ENCODE measurements at regions of chr5 and their contacts with region 1.

Region 1: DNA sequence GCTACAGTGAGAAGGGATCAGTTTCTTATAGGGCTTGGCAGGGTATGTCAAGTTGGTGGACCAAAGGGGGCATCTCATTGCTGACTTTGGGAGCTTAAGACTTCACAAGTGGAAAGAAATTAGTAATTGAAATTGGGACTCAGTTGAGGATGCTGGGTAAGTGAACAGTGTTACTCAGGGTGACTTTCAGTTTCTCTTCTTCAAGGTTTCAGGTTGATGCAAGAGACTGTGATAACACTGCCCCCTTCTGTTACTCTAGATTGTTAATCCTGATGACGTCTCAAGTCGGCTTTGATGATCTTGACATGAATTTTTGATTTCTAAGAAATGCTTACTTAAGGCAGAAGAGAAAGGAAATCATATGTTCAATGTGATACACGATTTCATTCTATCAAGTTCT is 21.3 kb downstream of the KCTD16 start:
- DNase-seq: peak; percentile 88
- H3K4me3 ChIP-seq: no peak overlapping the region
- H3K27ac ChIP-seq: peak overlapping the region; percentile 88
- H3K4me1 ChIP-seq: peaks cover 44% of the 10 kb centered on the region
- H3K27me3 ChIP-seq: no peaks in the 10 kb centered on the region
- CTCF ChIP-seq: peak; percentile 43 to 60
- POLR2A ChIP-seq: no peak

Region 2: DNA sequence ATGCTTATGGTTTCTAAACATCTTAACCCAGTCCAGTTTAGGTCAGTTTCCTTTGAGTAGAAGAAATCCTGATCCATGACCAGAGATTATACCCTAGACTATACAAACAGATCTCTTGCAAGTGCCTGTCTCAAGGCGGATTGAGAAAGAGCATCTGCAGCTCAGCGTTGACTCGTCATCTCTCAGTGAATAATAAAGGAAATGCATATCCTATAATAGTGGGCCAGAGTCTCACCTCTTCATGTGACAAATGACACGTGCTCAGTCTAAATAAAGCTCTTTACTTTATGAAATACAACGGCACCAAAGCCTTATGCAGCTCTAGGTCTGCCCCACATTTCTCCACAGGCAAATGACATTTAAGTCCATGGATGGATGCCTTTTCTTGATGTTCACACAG is 609.1 kb before region 1 on chr5:
- CTCF ChIA-PET with region 1: no interaction called
- POLR2A ChIA-PET with region 1: no interaction called
- dilution Hi-C with region 1: no loop called
- intact Hi-C with region 1: loop called (anchors 5 kb)
- DNase-seq: no peak
- H3K4me3 ChIP-seq: no peak overlapping the region
- H3K27ac ChIP-seq: no peak overlapping the region
- H3K4me1 ChIP-seq: peaks cover 18% of the 10 kb centered on the region
- H3K27me3 ChIP-seq: no peaks in the 10 kb centered on the region
- CTCF ChIP-seq: no peak
- POLR2A ChIP-seq: no peak

Region 3: GRCh38 chr5:143824851-143825720 is 366.9 kb before region 1 on chr5:
- CTCF ChIA-PET with region 1: no interaction called
- POLR2A ChIA-PET with region 1: no interaction called
- dilution Hi-C with region 1: no loop called
- intact Hi-C with region 1: loop called (anchors 1 kb)
- DNase-seq: peak; percentile 83
- H3K4me3 ChIP-seq: no peak overlapping the region
- H3K27ac ChIP-seq: no peak overlapping the region
- H3K4me1 ChIP-seq: no peaks in the 10 kb centered on the region
- H3K27me3 ChIP-seq: peaks cover 0 to 2% of the 10 kb centered on the region in 2 experiments
- CTCF ChIP-seq: peak; percentile 84
- POLR2A ChIP-seq: no peak

Region 4: GRCh38 chr5:144170276-144171024 is 21.5 kb before region 1 on chr5 and contains the starts of genes KCTD16 and YIPF5:
- CTCF ChIA-PET with region 1: interaction called, 6 read pairs
- POLR2A ChIA-PET with region 1: interaction called, 4 read pairs
- dilution Hi-C with region 1: no loop called
- intact Hi-C with region 1: loop called (anchors 1 kb)
- DNase-seq: peak; percentile 97
- H3K4me3 ChIP-seq: peak within 1 kb of the TSS; percentile 79 to 92 (median 92)
- H3K27ac ChIP-seq: peak within 1 kb of the TSS; percentile 83
- H3K4me1 ChIP-seq: peaks cover 23% of the 10 kb centered on the region
- H3K27me3 ChIP-seq: no peaks in the 10 kb centered on the region
- CTCF ChIP-seq: no peak
- POLR2A ChIP-seq: peak; percentile 78
- total RNA-seq, gene KCTD16: 0.30 and 0.49 TPM in 2 replicates
- total RNA-seq, gene YIPF5: 73.7 and 90.0 TPM in 2 replicates

Measured in endothelial cell of umbilical vein (primary cell).